ENCODE measurements at regions of chr2 and their contacts with region 1.

Region 1: GRCh38 chr2:10285556-10286198 is 17.0 kb upstream of the HPCAL1 start:
- DNase-seq: peak; percentile 91 to 94 (median 93)
- H3K4me3 ChIP-seq: peak overlapping the region in 1 of 3 experiments; percentile 30
- H3K4me3 Mint-ChIP-seq: peak overlapping the region; percentile 56 to 66
- H3K27ac ChIP-seq: peak overlapping the region; percentile 91 to 95
- H3K27ac Mint-ChIP-seq: peak overlapping the region; percentile 93 to 98 (median 96)
- H3K4me1 ChIP-seq: peaks cover 66 to 79% of the 10 kb centered on the region in 2 donors
- H3K4me1 Mint-ChIP-seq: peaks cover 76% of the 10 kb centered on the region
- H3K27me3 ChIP-seq: no peaks in the 10 kb centered on the region
- H3K27me3 Mint-ChIP-seq: peaks cover 1 to 2% (median 2%) of the 10 kb centered on the region in 3 donors
- CTCF ChIP-seq: no peak

Region 2: GRCh38 chr2:10254373-10255151 is 31.1 kb before region 1 on chr2:
- intact Hi-C with region 1: no loop called
- DNase-seq: no peak
- H3K4me3 ChIP-seq: no peak overlapping the region
- H3K4me3 Mint-ChIP-seq: peak overlapping the region in 1 of 2 donors; percentile 44
- H3K27ac ChIP-seq: no peak overlapping the region
- H3K27ac Mint-ChIP-seq: peak overlapping the region in 3 of 7 donors; percentile 41 to 70 (median 46)
- H3K4me1 ChIP-seq: peaks cover 13 to 24% of the 10 kb centered on the region in 2 donors
- H3K4me1 Mint-ChIP-seq: peaks cover 9% of the 10 kb centered on the region
- H3K27me3 ChIP-seq: peaks cover 0 to 14% of the 10 kb centered on the region in 2 donors
- H3K27me3 Mint-ChIP-seq: peaks cover 26 to 48% (median 39%) of the 10 kb centered on the region in 3 donors
- CTCF ChIP-seq: no peak

Region 3: DNA sequence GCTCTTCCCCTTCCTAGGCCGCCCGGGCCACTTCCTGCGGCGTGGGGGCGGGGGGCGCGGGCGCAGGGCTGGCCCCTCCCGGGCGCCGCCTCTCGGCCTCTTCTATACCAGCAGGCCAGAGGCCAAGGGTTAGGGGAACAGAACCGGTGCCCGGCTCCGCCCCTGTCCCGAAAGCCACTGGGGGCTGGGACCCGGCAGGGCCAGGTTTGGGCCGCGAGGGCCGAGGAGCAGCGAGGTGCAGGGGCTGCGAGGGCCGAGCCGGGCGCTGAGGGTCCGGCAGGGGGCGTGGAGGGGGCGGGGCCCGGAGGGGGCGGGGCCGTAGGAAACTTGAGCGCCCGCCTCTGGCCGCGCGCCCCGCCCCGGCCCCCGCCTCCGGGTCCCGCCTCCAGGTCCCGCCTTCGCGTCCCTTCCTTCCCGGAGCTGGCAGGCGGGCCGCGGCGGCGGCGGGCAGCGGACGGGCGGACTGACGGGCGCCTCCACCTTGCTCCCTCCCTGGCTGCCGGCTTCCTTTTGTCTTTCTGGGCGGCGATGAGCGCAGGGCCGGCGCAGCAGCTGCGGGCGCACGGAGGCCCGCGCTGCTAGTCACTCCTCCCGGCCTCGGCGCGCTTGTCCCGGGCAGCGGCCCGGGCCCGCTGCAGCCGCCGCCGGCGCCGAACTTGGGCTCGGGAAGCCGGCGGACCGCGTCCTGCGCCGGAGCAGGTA is 17.0 kb after region 1 on chr2 and contains the start of gene HPCAL1:
- intact Hi-C with region 1: loop called (anchors 2 kb)
- DNase-seq: peak; percentile 90 to 91 (median 90)
- H3K4me3 ChIP-seq: peak within 1 kb of the TSS; percentile 79 to 93 (median 84)
- H3K4me3 Mint-ChIP-seq: peak within 1 kb of the TSS; percentile 98 to 100
- H3K27ac ChIP-seq: peak within 1 kb of the TSS; percentile 87 to 94
- H3K27ac Mint-ChIP-seq: peak within 1 kb of the TSS; percentile 83 to 95 (median 92)
- H3K4me1 ChIP-seq: peaks cover 64 to 92% of the 10 kb centered on the region in 2 donors
- H3K4me1 Mint-ChIP-seq: peaks cover 76% of the 10 kb centered on the region
- H3K27me3 ChIP-seq: no peaks in the 10 kb centered on the region
- H3K27me3 Mint-ChIP-seq: peaks cover 0 to 5% (median 4%) of the 10 kb centered on the region in 3 donors
- CTCF ChIP-seq: peak; percentile 76
- polyA plus RNA-seq, gene HPCAL1: 82.1 to 99.5 (median 98.0) TPM

Region 4: GRCh38 chr2:10331027-10331701 is 45.5 kb after region 1 on chr2:
- intact Hi-C with region 1: loop called in 1 of 2 experiments (anchors 5 kb)
- DNase-seq: peak; percentile 50 to 61 (median 55)
- H3K4me3 ChIP-seq: peak overlapping the region in 2 of 3 experiments; percentile 28 to 63
- H3K4me3 Mint-ChIP-seq: peak overlapping the region; percentile 66 to 86
- H3K27ac ChIP-seq: peak overlapping the region; percentile 91 to 93
- H3K27ac Mint-ChIP-seq: peak overlapping the region; percentile 97 to 99 (median 98)
- H3K4me1 ChIP-seq: peaks cover 46 to 66% of the 10 kb centered on the region in 2 donors
- H3K4me1 Mint-ChIP-seq: peaks cover 70% of the 10 kb centered on the region
- H3K27me3 ChIP-seq: no peaks in the 10 kb centered on the region
- H3K27me3 Mint-ChIP-seq: peaks cover 0 to 4% (median 1%) of the 10 kb centered on the region in 3 donors
- CTCF ChIP-seq: peak; percentile 22